ENCODE measurements at regions of chr4 and their contacts with region 1.

Region 1: GRCh38 chr4:2761035-2761923 is 5.1 kb upstream of the TNIP2 start:
- DNase-seq: peak in 1 of 2 donors; percentile 77
- ATAC-seq: no peak
- H3K4me3 ChIP-seq: no peak overlapping the region
- H3K27ac ChIP-seq: no peak overlapping the region
- H3K4me1 ChIP-seq: no peaks in the 10 kb centered on the region
- H3K27me3 ChIP-seq: no peaks in the 10 kb centered on the region

Region 2: GRCh38 chr4:1842993-1843448 is 918.3 kb before region 1 on chr4:
- intact Hi-C with region 1: no loop called
- DNase-seq: no peak
- ATAC-seq: no peak
- H3K4me3 ChIP-seq: no peak overlapping the region
- H3K27ac ChIP-seq: no peak overlapping the region
- H3K4me1 ChIP-seq: no peaks in the 10 kb centered on the region
- H3K27me3 ChIP-seq: no peaks in the 10 kb centered on the region

Region 3: DNA sequence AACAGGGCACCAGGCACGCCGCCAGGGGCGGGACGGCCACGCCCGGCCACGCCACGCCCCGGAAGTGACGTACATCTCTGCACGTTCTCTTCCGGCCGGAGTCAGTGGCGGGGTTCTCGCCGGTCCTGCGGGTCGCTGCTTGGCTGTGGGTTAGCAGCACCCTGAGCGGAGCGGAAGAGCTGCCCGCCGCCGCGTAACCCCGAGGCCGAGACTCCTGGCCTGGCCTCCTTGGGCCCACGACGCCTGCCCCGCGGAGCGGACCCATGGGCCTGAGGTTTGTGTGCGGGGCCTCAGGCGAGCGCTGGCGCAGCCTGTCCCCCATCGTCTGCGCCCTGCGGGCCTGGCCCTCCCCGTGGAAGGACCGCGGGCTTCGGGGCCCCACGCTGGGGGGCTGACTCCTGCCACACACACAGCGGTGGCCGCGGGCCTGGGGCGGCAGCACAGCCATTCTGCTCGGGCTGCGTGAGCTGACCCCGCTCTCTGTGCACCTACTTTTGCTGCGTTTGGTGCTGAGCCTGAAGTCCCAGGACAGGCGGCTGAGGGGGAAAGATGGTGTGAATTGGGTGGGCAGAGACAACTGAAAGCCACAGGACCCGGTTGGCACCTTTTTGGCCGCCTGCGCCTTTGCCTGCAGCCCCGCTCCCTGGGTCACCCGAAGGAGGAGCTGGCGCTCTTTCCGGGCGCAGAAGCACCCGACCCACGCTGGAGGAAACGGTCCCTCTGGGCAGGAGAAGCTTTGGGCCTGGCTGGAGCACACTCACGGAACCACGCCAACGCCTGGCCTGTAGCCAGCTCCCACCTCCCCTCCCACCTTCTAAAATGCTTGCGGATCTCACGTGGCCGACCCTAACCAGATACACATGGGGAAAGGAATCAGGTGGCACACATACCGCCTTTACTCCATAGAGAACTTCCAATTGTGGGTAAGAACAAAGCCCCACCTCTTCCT is 173.8 kb after region 1 on chr4:
- intact Hi-C with region 1: loop called (anchors 5 to 10 kb)
- DNase-seq: peak; percentile 96 to 99
- ATAC-seq: peak; percentile 86
- H3K4me3 ChIP-seq: peak overlapping the region; percentile 67 to 86
- H3K27ac ChIP-seq: peak overlapping the region in 1 of 2 donors; percentile 50
- H3K4me1 ChIP-seq: no peaks in the 10 kb centered on the region
- H3K27me3 ChIP-seq: no peaks in the 10 kb centered on the region

Region 4: GRCh38 chr4:2963175-2963965 is 202.1 kb after region 1 on chr4 and contains the starts of genes GRK4 and NOP14:
- intact Hi-C with region 1: loop called in 1 of 2 experiments (anchors 5 kb)
- DNase-seq: peak; percentile 99 to 100
- ATAC-seq: peak; percentile 100
- H3K4me3 ChIP-seq: peak within 1 kb of the TSS; percentile 45 to 80
- H3K27ac ChIP-seq: peak within 1 kb of the TSS; percentile 12 to 60
- H3K4me1 ChIP-seq: no peaks in the 10 kb centered on the region
- H3K27me3 ChIP-seq: no peaks in the 10 kb centered on the region
- total RNA-seq, gene GRK4: 3.6 to 10.3 TPM
- total RNA-seq, gene NOP14: 15.0 to 15.5 TPM

Region 5: GRCh38 chr4:3037957-3038461 is 276.7 kb after region 1 on chr4:
- intact Hi-C with region 1: loop called in 1 of 2 experiments (anchors 5 kb)
- DNase-seq: peak in 1 of 2 donors; percentile 78
- ATAC-seq: no peak
- H3K4me3 ChIP-seq: no peak overlapping the region
- H3K27ac ChIP-seq: no peak overlapping the region
- H3K4me1 ChIP-seq: no peaks in the 10 kb centered on the region
- H3K27me3 ChIP-seq: no peaks in the 10 kb centered on the region